T-cell (primary cell): ENCODE measurements at regions of chr12 and their contacts with region 1.

Region 1: GRCh38 chr12:49110464-49111155 is at the start of gene LMBR1L:
- DNase-seq: peak; percentile 88 to 99 (median 97)
- ATAC-seq: peak; percentile 94 to 97 (median 96)
- H3K4me3 ChIP-seq: peak within 1 kb of the TSS; percentile 82 to 96
- H3K4me3 Mint-ChIP-seq: peak within 1 kb of the TSS; percentile 99
- H3K27ac ChIP-seq: peak within 1 kb of the TSS; percentile 90
- H3K27ac Mint-ChIP-seq: peak within 1 kb of the TSS; percentile 99
- H3K4me1 ChIP-seq: peaks cover 8 to 37% of the 10 kb centered on the region in 2 experiments
- H3K4me1 Mint-ChIP-seq: peaks cover 41 to 48% (median 46%) of the 10 kb centered on the region in 3 donors
- H3K27me3 ChIP-seq: peaks cover 0 to 2% of the 10 kb centered on the region in 2 experiments
- H3K27me3 Mint-ChIP-seq: no peaks in the 10 kb centered on the region
- total RNA-seq, gene LMBR1L: 159 to 302 (median 224) TPM

Region 2: GRCh38 chr12:49033611-49034316 is 76.8 kb before region 1 on chr12:
- CTCF ChIA-PET with region 1: no interaction called
- POLR2A ChIA-PET with region 1: no interaction called
- DNase-seq: no peak
- ATAC-seq: no peak
- H3K4me3 ChIP-seq: no peak overlapping the region
- H3K4me3 Mint-ChIP-seq: no peak overlapping the region
- H3K27ac ChIP-seq: no peak overlapping the region
- H3K27ac Mint-ChIP-seq: no peak overlapping the region
- H3K4me1 ChIP-seq: peaks cover 0 to 4% of the 10 kb centered on the region in 2 experiments
- H3K4me1 Mint-ChIP-seq: peaks cover 0 to 6% (median 0%) of the 10 kb centered on the region in 3 donors
- H3K27me3 ChIP-seq: no peaks in the 10 kb centered on the region
- H3K27me3 Mint-ChIP-seq: no peaks in the 10 kb centered on the region

Region 3: DNA sequence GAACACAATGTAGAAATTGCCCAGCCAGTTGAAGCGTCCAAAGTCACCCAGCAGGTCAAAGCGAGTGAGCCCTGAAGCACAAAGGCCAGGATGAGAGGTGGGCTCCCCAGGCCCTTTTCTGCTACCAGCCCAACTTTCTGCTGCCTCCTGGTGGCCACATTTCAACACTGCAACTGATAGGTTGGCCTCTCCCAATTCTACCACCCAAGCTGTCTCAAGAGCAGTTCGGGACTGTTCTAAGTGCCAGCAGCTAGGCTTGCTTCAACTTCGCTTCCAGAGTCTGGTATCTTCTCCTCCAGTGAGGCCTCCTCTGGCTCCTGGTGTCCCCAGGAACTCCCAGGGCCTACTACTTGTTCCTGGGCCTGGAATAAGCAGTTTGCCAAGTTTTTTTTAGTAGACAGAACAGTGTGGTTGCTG is 12.6 kb before region 1 on chr12:
- CTCF ChIA-PET with region 1: interaction called, 8 to 9 read pairs
- POLR2A ChIA-PET with region 1: interaction called, 10 to 13 read pairs
- DNase-seq: peak in 31 of 35 experiments; percentile 16 to 78 (median 54)
- ATAC-seq: peak; percentile 54 to 68 (median 62)
- H3K4me3 ChIP-seq: no peak overlapping the region
- H3K4me3 Mint-ChIP-seq: no peak overlapping the region
- H3K27ac ChIP-seq: no peak overlapping the region
- H3K27ac Mint-ChIP-seq: no peak overlapping the region
- H3K4me1 ChIP-seq: peaks cover 0 to 14% of the 10 kb centered on the region in 2 experiments
- H3K4me1 Mint-ChIP-seq: peaks cover 8 to 23% (median 14%) of the 10 kb centered on the region in 3 donors
- H3K27me3 ChIP-seq: peaks cover 0 to 20% of the 10 kb centered on the region in 2 experiments
- H3K27me3 Mint-ChIP-seq: peaks cover 17 to 22% of the 10 kb centered on the region in 2 donors

Region 4: DNA sequence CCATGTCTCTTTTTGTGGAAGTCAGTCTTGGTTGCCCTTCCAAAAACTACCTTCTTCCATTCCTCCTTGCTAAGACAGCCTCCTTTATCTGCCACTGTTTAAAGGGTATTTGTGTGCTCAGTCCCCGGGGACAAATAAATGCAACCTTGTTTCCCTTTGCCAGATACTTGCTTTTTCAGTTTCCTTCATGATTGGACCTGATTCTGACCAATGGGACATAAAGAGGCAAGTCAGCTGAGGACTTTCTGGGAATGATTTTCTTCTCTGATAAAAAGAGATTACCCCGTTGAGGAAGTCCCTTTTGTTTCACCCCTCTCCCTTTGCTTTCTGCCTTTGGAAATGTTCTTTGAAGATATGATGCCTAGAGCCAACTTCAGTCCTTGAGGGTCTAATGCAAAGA is 28.0 kb after region 1 on chr12:
- CTCF ChIA-PET with region 1: interaction called, 4 to 11 read pairs
- POLR2A ChIA-PET with region 1: interaction called, 8 read pairs
- DNase-seq: no peak
- ATAC-seq: no peak
- H3K4me3 ChIP-seq: no peak overlapping the region
- H3K4me3 Mint-ChIP-seq: no peak overlapping the region
- H3K27ac ChIP-seq: no peak overlapping the region
- H3K27ac Mint-ChIP-seq: no peak overlapping the region
- H3K4me1 ChIP-seq: no peaks in the 10 kb centered on the region
- H3K4me1 Mint-ChIP-seq: peaks cover 2 to 4% (median 2%) of the 10 kb centered on the region in 3 donors
- H3K27me3 ChIP-seq: no peaks in the 10 kb centered on the region
- H3K27me3 Mint-ChIP-seq: no peaks in the 10 kb centered on the region